Activated CD4-positive, alpha-beta T cell treated with anti-CD3 and anti-CD28 coated beads, Interleukin-2, amount 10 ng/mL, durations not matched to agents 24 days and 14 days (primary cell): ENCODE measurements at regions of chr13 and their contacts with region 1.

Region 1: DNA sequence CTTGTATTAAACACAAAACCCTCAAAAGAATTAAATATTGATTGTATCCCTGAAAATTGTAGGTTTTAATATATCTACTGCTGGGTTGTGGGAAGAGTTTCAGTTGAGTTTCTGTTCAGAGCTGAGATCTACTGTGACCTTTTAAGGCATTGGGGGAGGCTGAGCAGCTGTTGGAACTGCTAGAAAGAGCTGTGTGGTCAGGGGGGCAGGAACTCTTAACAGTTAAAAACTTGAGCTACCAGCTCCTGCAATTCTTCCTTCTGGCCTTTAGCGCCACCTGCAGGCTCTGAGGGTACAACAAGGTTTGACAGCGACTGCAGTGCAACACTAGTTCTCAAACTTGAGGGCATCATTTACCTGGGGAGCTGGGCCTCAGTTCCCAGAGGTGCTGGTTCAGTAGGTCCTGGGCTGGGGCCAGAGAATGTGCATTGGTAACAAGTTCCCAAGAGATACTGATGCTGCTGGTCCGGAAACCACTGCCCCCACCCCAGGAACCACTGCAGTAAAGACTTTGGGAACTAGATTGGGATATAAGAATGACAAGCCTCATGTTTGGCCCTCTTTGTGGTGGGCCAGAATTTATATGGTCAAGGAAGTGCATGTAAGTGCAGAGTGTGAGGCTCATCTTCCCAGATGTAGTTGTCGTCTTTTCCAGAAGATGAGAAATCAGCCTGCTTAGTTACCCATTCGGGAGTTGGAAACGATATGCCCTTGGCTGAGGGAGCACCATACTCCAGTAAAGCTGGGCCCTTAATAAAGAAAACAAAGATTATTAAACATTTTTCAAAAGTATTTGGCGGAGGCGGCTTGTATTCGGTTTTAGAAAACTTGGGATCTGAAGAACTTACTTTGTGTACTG is 2.6 kb downstream of the RNASEH2B start:
- DNase-seq: peak; percentile 98
- H3K4me3 Mint-ChIP-seq: peak overlapping the region; percentile 98
- H3K27ac Mint-ChIP-seq: peak overlapping the region; percentile 99
- H3K4me1 Mint-ChIP-seq: peaks cover 52% of the 10 kb centered on the region
- H3K27me3 Mint-ChIP-seq: no peaks in the 10 kb centered on the region

Region 2: DNA sequence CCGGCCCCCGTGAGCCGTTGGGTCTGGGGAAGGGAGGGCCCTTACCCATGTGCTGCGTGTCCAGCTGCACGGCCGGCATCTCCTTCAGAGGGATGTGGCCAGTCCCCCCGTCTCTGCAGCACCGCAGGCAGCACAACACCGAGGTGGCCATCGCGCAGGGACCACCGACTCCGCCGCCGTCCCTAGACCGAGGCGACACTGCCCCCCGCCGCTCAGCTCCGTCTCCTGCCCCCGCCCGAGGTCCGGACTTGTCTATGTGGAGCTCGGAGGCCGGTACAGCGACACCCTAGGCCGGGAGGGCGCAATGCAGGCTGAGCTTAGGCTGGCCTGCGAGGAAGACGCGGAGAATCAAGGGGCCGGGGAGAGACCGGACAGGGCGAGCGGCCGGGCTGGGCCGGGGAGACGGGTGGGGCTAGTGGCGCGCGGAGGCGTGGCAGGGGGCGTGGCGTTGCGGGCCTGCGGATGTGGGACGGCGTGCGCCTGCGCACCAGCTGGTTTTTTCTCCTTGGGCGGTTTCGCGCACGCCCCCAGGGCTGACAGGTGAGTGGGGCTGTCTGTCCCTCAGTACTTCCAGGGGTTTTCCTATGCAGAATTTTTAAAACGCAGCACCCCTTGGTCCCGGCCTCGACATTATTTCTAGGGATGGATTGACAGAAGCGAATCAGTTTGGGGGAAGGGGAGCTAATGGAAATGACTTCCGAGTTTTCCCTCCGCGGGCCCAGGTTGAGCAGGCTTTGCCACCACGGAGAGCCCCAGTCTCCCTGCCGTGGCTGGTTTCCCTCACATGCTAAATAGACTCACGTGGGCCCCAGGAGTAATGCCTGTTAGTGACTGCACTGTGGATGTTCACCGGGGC is 975.9 kb before region 1 on chr13 and contains the start of gene SPRYD7:
- intact Hi-C with region 1: loop called (anchors 1 kb)
- DNase-seq: peak; percentile 99
- H3K4me3 Mint-ChIP-seq: peak within 1 kb of the TSS; percentile 94
- H3K27ac Mint-ChIP-seq: peak within 1 kb of the TSS; percentile 83
- H3K4me1 Mint-ChIP-seq: peaks cover 13% of the 10 kb centered on the region
- H3K27me3 Mint-ChIP-seq: peaks cover 17% of the 10 kb centered on the region
- total RNA-seq, gene SPRYD7: 6.9 and 8.1 TPM in 2 replicates

Region 3: GRCh38 chr13:49996951-49997895 is 914.9 kb before region 1 on chr13 and contains the start of gene TRIM13:
- intact Hi-C with region 1: loop called (anchors 1 kb)
- DNase-seq: peak; percentile 95
- H3K4me3 Mint-ChIP-seq: peak within 1 kb of the TSS; percentile 88
- H3K27ac Mint-ChIP-seq: peak within 1 kb of the TSS; percentile 95
- H3K4me1 Mint-ChIP-seq: peaks cover 36% of the 10 kb centered on the region
- H3K27me3 Mint-ChIP-seq: no peaks in the 10 kb centered on the region
- total RNA-seq, gene TRIM13: 18.0 and 18.9 TPM in 2 replicates

Region 4: DNA sequence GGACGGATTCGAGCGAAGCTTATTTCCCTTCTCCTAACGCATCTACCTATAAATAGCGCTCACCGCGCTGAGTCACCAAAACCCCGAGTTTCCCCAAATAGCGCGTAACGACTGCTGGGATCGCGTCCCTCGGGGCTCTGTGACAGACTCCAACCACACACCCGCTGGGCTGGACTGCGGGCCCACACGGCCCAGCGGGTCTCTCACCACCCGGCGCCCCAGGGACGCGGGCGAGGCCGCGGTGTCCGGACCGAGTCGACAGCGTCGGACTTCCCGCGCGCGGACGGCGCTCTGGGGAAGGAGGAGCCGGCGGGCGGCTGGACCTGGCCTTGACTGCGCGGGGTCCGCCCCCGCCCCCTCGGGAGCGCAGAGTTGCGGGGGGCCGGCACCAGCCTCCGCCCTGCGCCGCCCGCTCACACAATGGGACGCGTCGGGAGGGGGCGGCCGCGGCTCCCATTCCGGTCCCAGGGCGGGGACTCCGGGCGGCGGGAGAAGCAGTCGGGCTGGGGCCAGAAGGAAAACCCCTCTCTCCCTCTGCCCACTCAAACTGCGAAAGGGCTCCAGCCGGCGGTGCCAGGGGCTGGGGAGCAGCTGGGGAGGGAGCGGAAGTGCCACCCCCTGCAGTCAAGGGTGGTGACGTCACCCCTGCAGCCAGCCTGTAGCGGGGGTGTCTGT is 788.2 kb before region 1 on chr13:
- intact Hi-C with region 1: loop called (anchors 2 kb)
- DNase-seq: peak; percentile 89
- H3K4me3 Mint-ChIP-seq: peak overlapping the region; percentile 84
- H3K27ac Mint-ChIP-seq: peak overlapping the region; percentile 93
- H3K4me1 Mint-ChIP-seq: peaks cover 41% of the 10 kb centered on the region
- H3K27me3 Mint-ChIP-seq: peaks cover 3% of the 10 kb centered on the region

Region 5: DNA sequence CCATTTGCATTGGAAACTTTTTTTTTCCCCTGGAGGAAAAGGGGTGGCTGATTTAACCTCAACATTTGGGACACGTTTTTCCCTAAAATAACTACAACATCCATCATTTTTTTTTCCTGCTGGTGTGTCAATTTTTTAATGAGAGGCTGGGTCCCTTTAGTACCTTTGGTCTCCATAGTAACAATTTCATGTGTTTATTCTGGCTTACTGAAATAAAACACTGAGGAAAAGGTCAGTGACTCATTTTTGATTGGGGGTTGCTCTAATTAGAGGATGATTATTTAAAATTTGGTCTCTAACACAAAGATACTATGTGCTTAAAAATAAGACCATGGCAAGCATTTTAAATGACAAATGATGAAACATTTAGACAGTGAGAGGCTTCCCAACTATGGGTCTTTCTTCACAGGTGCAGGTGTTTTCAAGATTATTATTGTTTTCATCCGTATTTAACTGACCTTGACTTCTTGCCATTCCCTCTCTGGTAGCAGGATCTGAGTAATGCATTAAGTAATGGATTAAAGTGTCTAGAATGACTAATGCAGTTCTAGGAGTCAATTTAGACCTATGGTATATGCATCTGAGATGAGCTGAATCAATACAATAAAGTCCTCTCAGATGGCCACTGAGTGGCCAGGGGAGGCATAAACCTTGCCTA is 490.6 kb before region 1 on chr13:
- intact Hi-C with region 1: loop called (anchors 10 kb)
- DNase-seq: no peak
- H3K4me3 Mint-ChIP-seq: no peak overlapping the region
- H3K27ac Mint-ChIP-seq: no peak overlapping the region
- H3K4me1 Mint-ChIP-seq: peaks cover 7% of the 10 kb centered on the region
- H3K27me3 Mint-ChIP-seq: no peaks in the 10 kb centered on the region

Region 6: GRCh38 chr13:50713523-50714248 is 198.5 kb before region 1 on chr13:
- intact Hi-C with region 1: loop called (anchors 10 kb)
- DNase-seq: peak; percentile 79
- H3K4me3 Mint-ChIP-seq: peak overlapping the region; percentile 66
- H3K27ac Mint-ChIP-seq: peak overlapping the region; percentile 23
- H3K4me1 Mint-ChIP-seq: peaks cover 15% of the 10 kb centered on the region
- H3K27me3 Mint-ChIP-seq: peaks cover 21% of the 10 kb centered on the region

Region 7: GRCh38 chr13:50893211-50893852 is 18.8 kb before region 1 on chr13:
- intact Hi-C with region 1: loop called (anchors 1 kb)
- DNase-seq: peak; percentile 84
- H3K4me3 Mint-ChIP-seq: peak overlapping the region; percentile 63
- H3K27ac Mint-ChIP-seq: peak overlapping the region; percentile 86
- H3K4me1 Mint-ChIP-seq: peaks cover 54% of the 10 kb centered on the region
- H3K27me3 Mint-ChIP-seq: no peaks in the 10 kb centered on the region